ENCODE measurements at regions of chr19 and their contacts with region 1.

Region 1: DNA sequence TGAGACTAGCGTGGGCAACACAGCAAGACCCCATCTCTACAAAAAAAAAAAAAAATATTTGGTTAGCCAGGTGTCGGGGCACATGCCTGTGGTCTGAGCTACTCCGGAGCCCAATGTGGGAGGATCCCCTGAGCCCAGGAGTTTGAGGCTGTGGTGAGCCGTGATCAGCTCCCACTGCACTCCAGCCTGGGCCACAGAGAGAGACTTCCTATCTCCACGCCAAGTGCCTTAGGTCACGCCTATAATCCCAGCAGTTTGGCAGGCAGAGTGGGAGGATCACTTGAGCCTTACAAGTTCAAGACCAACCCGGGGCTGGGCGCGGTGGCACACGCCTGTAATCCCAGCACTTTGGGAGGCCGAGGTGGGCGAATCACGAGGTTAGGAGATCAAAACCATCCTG is 8.7 kb upstream of the ADAT3 start:
- DNase-seq: no peak
- ATAC-seq: no peak
- H3K4me3 ChIP-seq: no peak overlapping the region
- H3K27ac ChIP-seq: no peak overlapping the region
- H3K4me1 ChIP-seq: peaks cover 3% of the 10 kb centered on the region; the same call in 1 of the 2 replicates
- H3K27me3 ChIP-seq: no peaks in the 10 kb centered on the region
- CTCF ChIP-seq: no peak

Region 2: DNA sequence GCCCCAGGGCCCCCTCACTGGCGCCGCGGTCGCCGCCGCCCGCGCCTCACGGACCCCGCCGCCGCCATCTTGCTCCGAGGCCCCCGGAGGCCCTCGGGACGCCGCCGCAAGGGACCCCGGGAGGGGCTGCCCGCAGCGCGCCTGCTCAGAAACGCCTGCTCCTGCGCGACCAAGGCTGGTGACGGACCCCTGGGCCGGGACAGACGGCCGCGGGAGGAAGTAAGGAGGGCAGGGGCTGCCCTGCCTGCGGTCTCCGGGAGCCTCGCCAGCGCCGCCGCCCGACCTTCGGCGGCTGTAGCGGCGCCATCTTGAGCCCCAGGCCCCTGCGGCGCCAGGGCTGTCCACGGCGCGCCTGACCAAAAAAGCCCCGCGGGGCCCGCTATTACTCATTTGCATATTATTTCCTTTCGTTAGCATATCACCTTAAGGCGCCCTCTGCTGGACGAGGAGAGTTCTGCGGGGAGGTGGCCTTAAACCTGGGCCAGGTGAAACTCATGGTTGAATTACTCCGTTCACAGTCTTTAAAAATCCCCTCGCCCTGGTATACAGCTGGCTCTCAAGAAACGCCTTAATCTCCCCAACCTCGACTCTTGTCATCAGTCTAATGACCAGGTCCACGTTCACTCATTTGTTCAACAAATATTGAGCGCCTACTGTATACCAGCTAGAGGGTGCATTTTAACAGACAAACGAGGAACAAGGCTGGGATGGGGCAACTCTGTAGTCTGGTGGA is 47.9 kb before region 1 on chr19 and contains the start of gene REXO1:
- CTCF ChIA-PET with region 1: no interaction called
- POLR2A ChIA-PET with region 1: no interaction called
- in situ Hi-C with region 1: no loop called
- intact Hi-C with region 1: no loop called
- DNase-seq: no peak
- ATAC-seq: peak; percentile 77
- H3K4me3 ChIP-seq: peak within 1 kb of the TSS; percentile 80 to 84
- H3K27ac ChIP-seq: peak within 1 kb of the TSS; percentile 90
- H3K4me1 ChIP-seq: peaks cover 40% of the 10 kb centered on the region
- H3K27me3 ChIP-seq: no peaks in the 10 kb centered on the region
- CTCF ChIP-seq: peak; percentile 90
- total RNA-seq, gene REXO1: 52.1 TPM

Region 3: DNA sequence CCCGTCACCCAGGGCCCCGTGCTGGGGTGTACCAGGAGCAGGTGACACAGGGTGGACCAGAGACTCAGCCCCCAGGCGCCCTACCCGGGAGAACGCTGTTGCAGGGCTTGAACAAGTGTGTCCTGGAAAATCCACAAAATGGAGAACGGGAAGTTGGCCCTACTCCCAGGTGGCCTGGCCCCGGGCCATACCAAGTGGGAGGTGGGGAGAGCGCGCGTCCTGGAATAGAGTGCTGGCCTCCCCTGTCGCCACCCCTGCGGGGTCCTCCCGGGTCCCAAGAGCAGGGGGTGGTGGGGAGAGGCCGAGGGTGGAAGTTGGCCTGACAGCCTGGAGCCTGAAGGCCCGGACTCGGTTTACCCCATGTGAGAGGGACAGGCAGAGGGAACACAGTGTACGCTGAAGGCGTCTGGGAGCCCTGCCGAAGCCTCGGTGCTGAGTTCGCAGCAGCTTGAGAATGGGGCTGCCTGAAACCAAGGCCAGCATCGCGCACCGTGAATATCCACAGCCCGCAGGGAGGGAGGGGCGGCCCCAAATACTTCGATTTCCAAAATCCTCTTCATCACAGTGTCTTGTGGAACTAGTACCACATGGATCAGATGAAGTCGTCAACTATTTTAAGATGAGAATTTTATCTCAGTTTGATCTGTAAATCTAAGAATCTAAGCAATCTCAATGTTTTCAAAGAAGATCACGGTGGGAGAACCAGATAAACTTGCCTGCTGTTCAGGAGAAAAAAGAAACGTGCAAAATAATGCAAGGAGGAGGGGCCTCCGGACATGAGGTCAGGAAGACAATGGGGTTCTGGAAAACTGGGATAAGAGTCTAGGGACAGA is 22.8 kb before region 1 on chr19:
- CTCF ChIA-PET with region 1: interaction called, 8 read pairs
- POLR2A ChIA-PET with region 1: interaction called, 13 read pairs
- in situ Hi-C with region 1: no loop called
- intact Hi-C with region 1: no loop called
- DNase-seq: no peak
- ATAC-seq: no peak
- H3K4me3 ChIP-seq: peak overlapping the region; percentile 67 to 80
- H3K27ac ChIP-seq: peak overlapping the region; percentile 83
- H3K4me1 ChIP-seq: peaks cover 20% of the 10 kb centered on the region
- H3K27me3 ChIP-seq: no peaks in the 10 kb centered on the region
- CTCF ChIP-seq: no peak

Measured in Panc1 (cell line).